ENCODE measurements at regions of chr6 and their contacts with region 1.

Region 1: GRCh38 chr6:26054857-26055669 is 32.2 kb upstream of the HFE start:
- DNase-seq: peak; percentile 90
- H3K4me3 Mint-ChIP-seq: peak overlapping the region; percentile 71
- H3K27ac Mint-ChIP-seq: peak overlapping the region; percentile 97
- H3K4me1 Mint-ChIP-seq: peaks cover 34% of the 10 kb centered on the region
- H3K27me3 Mint-ChIP-seq: no peaks in the 10 kb centered on the region
- CTCF ChIP-seq: no peak

Region 2: DNA sequence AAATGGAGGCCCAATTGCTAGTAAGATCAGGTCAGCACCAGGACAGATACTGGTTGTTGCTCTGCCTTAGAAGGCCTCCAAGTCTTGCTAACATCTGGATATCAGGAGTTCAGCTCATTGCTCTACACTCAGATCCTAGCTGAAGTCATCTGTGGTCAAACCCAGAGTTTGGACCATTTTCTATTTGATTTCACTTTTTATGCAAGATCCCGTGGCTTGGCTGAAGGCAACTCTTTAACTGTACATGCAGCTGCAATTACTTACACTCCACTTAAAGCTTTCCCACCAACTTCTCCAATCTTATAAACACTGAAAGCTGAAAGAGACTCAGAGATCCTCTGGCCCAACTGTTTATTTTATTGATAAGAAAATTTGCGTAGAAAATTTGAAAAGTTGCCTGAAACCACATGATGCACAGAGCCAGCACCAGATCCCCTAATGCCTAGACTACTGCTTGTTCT is 127.3 kb before region 1 on chr6:
- CTCF ChIA-PET with region 1: no interaction called
- intact Hi-C with region 1: no loop called
- DNase-seq: no peak
- H3K4me3 Mint-ChIP-seq: no peak overlapping the region
- H3K27ac Mint-ChIP-seq: no peak overlapping the region
- H3K4me1 Mint-ChIP-seq: peaks cover 7% of the 10 kb centered on the region
- H3K27me3 Mint-ChIP-seq: no peaks in the 10 kb centered on the region
- CTCF ChIP-seq: no peak

Region 3: GRCh38 chr6:26025894-26026832 is 28.9 kb before region 1 on chr6:
- CTCF ChIA-PET with region 1: interaction called, 14 read pairs
- intact Hi-C with region 1: no loop called
- DNase-seq: peak; percentile 98
- H3K4me3 Mint-ChIP-seq: peak overlapping the region; percentile 80
- H3K27ac Mint-ChIP-seq: peak overlapping the region; percentile 100
- H3K4me1 Mint-ChIP-seq: peaks cover 72% of the 10 kb centered on the region
- H3K27me3 Mint-ChIP-seq: peaks cover 13% of the 10 kb centered on the region
- CTCF ChIP-seq: peak; percentile 93

Region 4: GRCh38 chr6:26031595-26032339 is 23.3 kb before region 1 on chr6:
- CTCF ChIA-PET with region 1: interaction called, 14 read pairs
- intact Hi-C with region 1: loop called (anchors 2 kb)
- DNase-seq: peak; percentile 95
- H3K4me3 Mint-ChIP-seq: peak overlapping the region; percentile 88
- H3K27ac Mint-ChIP-seq: peak overlapping the region; percentile 100
- H3K4me1 Mint-ChIP-seq: peaks cover 77% of the 10 kb centered on the region
- H3K27me3 Mint-ChIP-seq: peaks cover 10% of the 10 kb centered on the region
- CTCF ChIP-seq: no peak

Region 5: GRCh38 chr6:27031302-27031701 is 976.2 kb after region 1 on chr6:
- CTCF ChIA-PET with region 1: no interaction called
- intact Hi-C with region 1: no loop called
- DNase-seq: no peak
- H3K4me3 Mint-ChIP-seq: no peak overlapping the region
- H3K27ac Mint-ChIP-seq: no peak overlapping the region
- H3K4me1 Mint-ChIP-seq: no peaks in the 10 kb centered on the region
- H3K27me3 Mint-ChIP-seq: no peaks in the 10 kb centered on the region
- CTCF ChIP-seq: no peak